Posterior vena cava (tissue), 2 donors: ENCODE measurements at regions of chr3 and their contacts with region 1.

Region 1: GRCh38 chr3:159739886-159740453 is 248.7 kb upstream of the IL12A start:
- DNase-seq: no peak

Region 2: GRCh38 chr3:159693226-159693625 is 46.7 kb before region 1 on chr3:
- intact Hi-C with region 1: loop called in 1 of 2 experiments (anchors 10 kb)
- DNase-seq: no peak

Region 3: DNA sequence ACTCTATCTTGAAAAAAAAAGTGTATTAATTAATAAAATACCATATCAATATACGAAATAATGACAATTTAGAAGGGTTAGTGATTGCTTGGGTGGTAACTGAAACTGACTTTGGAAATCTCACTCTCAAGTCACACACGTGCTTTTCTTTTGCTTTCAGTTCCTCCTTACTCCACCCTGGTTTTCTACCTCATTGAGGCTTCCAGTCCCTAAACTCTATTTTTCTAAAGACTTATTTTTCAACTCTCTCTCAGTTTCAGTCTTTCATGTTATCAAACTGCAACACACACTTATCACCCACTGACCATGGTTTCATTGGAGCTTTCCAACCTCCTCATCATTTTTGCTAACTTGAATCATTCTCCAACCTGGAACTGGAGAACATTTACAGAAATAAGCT is 272.1 kb after region 1 on chr3:
- intact Hi-C with region 1: no loop called
- DNase-seq: no peak

Region 4: GRCh38 chr3:160163229-160163878 is 423.4 kb after region 1 on chr3:
- intact Hi-C with region 1: no loop called
- DNase-seq: no peak

Region 5: DNA sequence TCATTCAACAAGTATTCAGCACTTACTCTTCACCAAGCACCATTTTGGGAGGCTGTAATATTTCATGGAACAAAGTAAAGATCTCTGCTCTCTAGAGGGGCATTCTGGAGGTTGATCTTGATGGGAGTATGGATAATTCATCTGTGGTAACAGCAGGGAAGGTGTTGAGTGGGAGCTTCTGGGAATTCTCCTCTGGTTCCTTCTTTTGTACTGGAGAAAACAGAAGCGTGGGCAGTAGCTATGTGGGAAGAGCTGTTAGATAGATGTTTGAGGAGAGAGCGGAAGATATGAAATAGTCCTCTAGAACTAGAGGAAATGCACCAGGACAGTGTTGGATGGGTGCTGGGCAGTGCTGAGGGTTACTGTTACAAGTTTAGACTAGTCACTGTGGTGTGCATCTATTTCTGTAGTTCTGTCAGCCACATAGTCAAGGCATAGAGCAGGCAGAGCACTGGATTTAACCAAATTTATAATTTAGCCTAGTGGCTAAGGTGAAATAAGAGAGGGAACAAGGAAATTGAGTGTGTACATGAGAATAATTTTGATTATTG is 1490.7 kb after region 1 on chr3:
- intact Hi-C with region 1: no loop called
- DNase-seq: no peak